ENCODE measurements at regions of chr3 and their contacts with region 1.

Region 1: GRCh38 chr3:119463171-119464169 is at the start of gene TMEM39A:
- DNase-seq: peak; percentile 98 to 100 (median 99)
- ATAC-seq: peak; percentile 86
- H3K4me3 ChIP-seq: peak within 1 kb of the TSS; percentile 93 to 94
- H3K4me3 Mint-ChIP-seq: peak within 1 kb of the TSS; percentile 93
- H3K27ac ChIP-seq: peak within 1 kb of the TSS; percentile 85 to 97
- H3K27ac Mint-ChIP-seq: peak within 1 kb of the TSS; percentile 96
- H3K4me1 ChIP-seq: peaks cover 19% of the 10 kb centered on the region
- H3K4me1 Mint-ChIP-seq: peaks cover 44% of the 10 kb centered on the region
- H3K27me3 ChIP-seq: no peaks in the 10 kb centered on the region
- H3K27me3 Mint-ChIP-seq: no peaks in the 10 kb centered on the region
- CTCF ChIP-seq: no peak
- total RNA-seq, gene TMEM39A: 67.8 to 68.0 TPM

Region 2: DNA sequence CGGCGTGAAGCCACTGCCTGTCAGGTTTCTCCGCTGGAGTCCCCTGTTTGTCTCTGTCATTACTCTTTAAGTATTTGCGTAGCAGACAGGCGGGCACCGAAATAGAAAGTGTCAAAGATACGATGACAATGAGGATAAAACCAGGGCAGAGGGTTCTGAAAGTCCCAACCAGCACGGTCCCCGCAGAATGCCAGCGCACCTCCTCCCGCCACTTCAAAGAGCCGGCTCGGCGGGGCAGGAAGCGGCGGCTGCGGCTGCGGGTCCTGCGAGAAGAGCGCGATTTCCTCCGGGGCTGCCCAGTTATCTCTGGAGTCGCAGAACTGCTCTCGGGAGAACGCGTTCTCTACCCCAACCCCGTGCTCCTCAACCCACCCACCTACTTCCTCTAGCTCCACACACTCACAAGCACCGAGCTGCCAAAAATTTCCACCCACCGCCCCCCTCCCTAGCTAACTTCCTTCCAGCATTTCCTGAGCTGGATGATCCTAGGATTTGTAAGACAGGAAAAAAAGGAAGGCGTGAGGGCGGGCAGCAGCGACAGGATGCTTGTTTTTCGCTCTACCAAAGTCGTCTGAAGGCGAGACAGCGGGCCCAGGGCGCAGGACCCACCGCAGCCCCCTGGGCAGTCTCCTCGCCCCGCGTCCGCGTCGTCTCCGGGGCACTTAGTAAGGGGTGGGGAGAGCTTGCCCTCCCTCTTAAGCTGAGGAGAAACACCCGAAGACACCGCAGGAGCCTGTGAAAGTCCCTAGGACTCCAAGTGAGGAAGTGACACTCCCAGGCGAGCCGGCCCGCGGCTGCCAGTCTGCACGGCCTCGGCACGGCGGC is 169.4 kb before region 1 on chr3 and contains the start of gene ARHGAP31:
- CTCF ChIA-PET with region 1: no interaction called
- POLR2A ChIA-PET with region 1: interaction called, 16 read pairs
- intact Hi-C with region 1: loop called (anchors 1 to 2 kb)
- DNase-seq: peak; percentile 71 to 96 (median 86)
- ATAC-seq: peak; percentile 64
- H3K4me3 ChIP-seq: peak within 1 kb of the TSS; percentile 61 to 82
- H3K4me3 Mint-ChIP-seq: peak within 1 kb of the TSS; percentile 95
- H3K27ac ChIP-seq: peak within 1 kb of the TSS; percentile 58 to 84
- H3K27ac Mint-ChIP-seq: peak within 1 kb of the TSS; percentile 98
- H3K4me1 ChIP-seq: peaks cover 30% of the 10 kb centered on the region
- H3K4me1 Mint-ChIP-seq: peaks cover 55% of the 10 kb centered on the region
- H3K27me3 ChIP-seq: no peaks in the 10 kb centered on the region
- H3K27me3 Mint-ChIP-seq: no peaks in the 10 kb centered on the region
- CTCF ChIP-seq: no peak
- total RNA-seq, gene ARHGAP31: 1.00 to 1.1 TPM

Measured in CD8-positive, alpha-beta T cell (primary cell).